GM12878 (cell line): ENCODE measurements at regions of chr7 and their contacts with region 1.

Region 1: DNA sequence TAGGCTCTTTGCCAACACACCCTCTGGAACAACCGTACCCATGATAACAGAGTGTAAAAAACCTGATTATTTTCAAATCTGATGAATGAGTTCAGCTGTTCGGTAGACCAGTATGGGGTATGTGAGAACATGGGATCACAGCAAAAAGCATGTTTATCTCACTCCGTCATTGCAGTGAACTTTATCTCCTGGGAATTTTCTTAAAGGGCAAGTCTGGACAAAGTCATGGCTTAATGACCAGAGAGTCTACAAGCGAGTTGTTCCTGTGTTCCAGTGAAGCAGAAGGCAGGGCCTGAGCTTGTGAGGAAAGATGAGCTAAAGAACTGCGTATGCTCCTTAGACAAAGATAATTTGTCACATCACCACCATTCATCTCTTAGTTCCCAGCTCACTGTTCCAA is 219.7 kb downstream of the TRIL start:
- DNase-seq: no peak
- ATAC-seq: no peak
- H3K4me3 ChIP-seq: no peak overlapping the region
- H3K27ac ChIP-seq: no peak overlapping the region
- H3K4me1 ChIP-seq: peaks cover 3% of the 10 kb centered on the region; the same call in 1 of the 2 replicates
- H3K27me3 ChIP-seq: no peaks in the 10 kb centered on the region
- CTCF ChIP-seq: no peak
- EP300 ChIP-seq: no peak
- POLR2A ChIP-seq: no peak
- RAD21 ChIP-seq: no peak

Region 2: GRCh38 chr7:28433699-28434219 is 304.7 kb before region 1 on chr7:
- CTCF ChIA-PET with region 1: no interaction called
- POLR2A ChIA-PET with region 1: no interaction called
- RAD21 ChIA-PET with region 1: no interaction called
- SMC1A ChIA-PET with region 1: no interaction called
- in situ Hi-C with region 1: no loop called
- intact Hi-C with region 1: no loop called
- DNase-seq: no peak
- ATAC-seq: peak; percentile 49
- H3K4me3 ChIP-seq: no peak overlapping the region
- H3K27ac ChIP-seq: no peak overlapping the region
- H3K4me1 ChIP-seq: no peaks in the 10 kb centered on the region
- H3K27me3 ChIP-seq: no peaks in the 10 kb centered on the region
- CTCF ChIP-seq: no peak
- EP300 ChIP-seq: no peak
- POLR2A ChIP-seq: no peak
- RAD21 ChIP-seq: no peak

Region 3: GRCh38 chr7:28748933-28749584 is 10.6 kb after region 1 on chr7:
- CTCF ChIA-PET with region 1: interaction called, 23 read pairs
- POLR2A ChIA-PET with region 1: interaction called, 7 read pairs
- RAD21 ChIA-PET with region 1: no interaction called
- SMC1A ChIA-PET with region 1: interaction called, 12 read pairs
- in situ Hi-C with region 1: no loop called
- intact Hi-C with region 1: no loop called
- DNase-seq: no peak
- ATAC-seq: peak; percentile 95
- H3K4me3 ChIP-seq: no peak overlapping the region
- H3K27ac ChIP-seq: no peak overlapping the region
- H3K4me1 ChIP-seq: no peaks in the 10 kb centered on the region
- H3K27me3 ChIP-seq: no peaks in the 10 kb centered on the region
- CTCF ChIP-seq: peak in 1 of 3 experiments; percentile 24; a peak in 1 of 6 replicates
- EP300 ChIP-seq: no peak
- POLR2A ChIP-seq: no peak
- RAD21 ChIP-seq: peak; percentile 40; the same call in 1 of the 2 replicates